ENCODE measurements at regions of chr1 and their contacts with region 1.

Region 1: DNA sequence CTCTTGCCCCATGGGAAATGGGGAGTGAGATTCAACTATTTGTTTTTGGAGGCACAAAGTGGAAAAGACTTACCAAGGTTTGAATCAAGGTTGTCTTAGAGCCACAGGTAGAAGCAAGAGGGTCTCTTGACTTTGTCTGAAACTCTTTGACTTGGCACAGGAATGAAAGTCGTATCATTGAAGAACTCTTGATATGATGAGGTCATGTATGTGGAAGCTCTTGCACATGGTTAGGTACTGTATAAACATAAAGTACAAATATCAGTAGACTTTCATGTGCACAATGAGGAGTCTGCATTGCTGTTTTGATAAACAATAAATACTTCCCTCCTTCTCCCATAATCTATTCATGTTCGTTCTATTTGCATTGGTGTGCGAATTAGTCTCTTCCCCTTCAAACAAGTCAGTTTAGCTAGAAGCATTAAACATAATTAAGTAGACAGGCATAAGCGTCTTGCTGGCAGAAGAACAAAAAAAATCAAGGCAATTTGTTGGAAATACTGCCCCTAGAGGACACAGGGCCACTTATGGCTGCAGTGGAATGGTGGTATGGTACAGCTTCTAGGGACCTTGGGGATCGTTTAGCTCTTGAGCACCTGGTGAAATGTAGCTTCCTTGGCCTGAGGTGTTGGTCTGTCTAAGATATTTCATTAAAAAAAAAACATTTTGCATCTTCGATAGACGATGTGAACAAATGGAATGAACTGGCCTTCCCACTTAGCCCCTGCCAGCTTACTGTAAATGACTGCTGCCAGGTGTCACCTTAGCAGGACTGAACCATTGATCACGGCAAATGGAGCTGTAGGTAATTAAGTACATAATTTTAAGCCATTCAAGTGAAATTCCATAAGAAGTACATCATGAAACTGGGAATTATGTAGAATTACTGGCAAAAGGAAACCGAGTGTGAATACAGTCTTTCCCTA is 218.0 kb upstream of the GALNT2 start:
- DNase-seq: peak in 1 of 2 experiments; percentile 43
- H3K4me3 ChIP-seq: no peak overlapping the region
- H3K4me3 Mint-ChIP-seq: no peak overlapping the region
- H3K27ac Mint-ChIP-seq: no peak overlapping the region
- H3K4me1 ChIP-seq: no peaks in the 10 kb centered on the region; the same call in 1 of the 2 replicates
- H3K4me1 Mint-ChIP-seq: peaks cover 9% of the 10 kb centered on the region
- H3K27me3 ChIP-seq: no peaks in the 10 kb centered on the region
- H3K27me3 Mint-ChIP-seq: peaks cover 2% of the 10 kb centered on the region
- CTCF ChIP-seq: peak; percentile 32 to 54

Region 2: DNA sequence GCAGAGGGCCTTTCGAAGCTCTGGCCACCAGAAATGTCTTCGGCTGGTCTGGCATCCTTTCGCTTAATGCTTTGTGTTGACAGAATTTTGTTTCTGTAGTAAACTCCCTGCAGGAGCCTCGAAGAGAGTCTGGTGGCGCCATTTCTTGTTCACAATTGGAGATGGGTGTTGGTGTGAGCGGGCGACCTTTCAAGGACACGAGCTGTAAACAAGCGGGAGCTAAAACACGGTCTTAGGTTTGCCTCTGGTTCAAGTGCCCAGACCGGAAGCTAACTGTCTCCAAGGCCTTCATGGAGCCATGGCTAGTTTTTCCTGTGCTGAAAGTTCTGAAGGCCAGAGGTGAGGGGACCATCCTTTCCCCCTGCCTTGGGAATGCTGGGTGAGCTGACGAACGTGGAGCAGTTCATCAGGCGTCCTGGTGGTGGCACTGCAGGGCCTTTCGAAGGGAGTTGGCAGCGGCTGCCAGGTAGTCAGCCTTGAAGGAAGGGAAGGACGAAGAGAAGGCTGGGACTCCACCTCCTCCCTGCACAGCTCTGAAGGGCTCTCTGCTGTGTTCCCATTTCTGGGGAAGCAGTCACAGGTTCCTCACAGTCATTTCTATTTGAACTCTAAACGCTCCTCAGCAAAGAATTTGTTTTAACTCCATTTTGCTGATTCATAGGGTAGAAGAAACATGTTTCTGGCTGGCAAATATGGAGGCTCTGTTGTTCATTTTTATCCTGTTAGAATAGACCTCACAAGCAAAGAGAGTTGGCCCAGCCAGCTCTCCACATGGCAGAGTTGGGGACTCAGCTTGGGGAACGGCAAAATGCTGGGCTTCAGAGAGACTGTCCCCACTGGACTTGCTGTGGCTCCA is 187.8 kb before region 1 on chr1:
- CTCF ChIA-PET with region 1: interaction called, 9 read pairs
- POLR2A ChIA-PET with region 1: no interaction called
- intact Hi-C with region 1: loop called (anchors 5 kb)
- DNase-seq: peak; percentile 65 to 79
- H3K4me3 ChIP-seq: no peak overlapping the region
- H3K4me3 Mint-ChIP-seq: no peak overlapping the region
- H3K27ac Mint-ChIP-seq: no peak overlapping the region
- H3K4me1 ChIP-seq: no peaks in the 10 kb centered on the region
- H3K4me1 Mint-ChIP-seq: no peaks in the 10 kb centered on the region
- H3K27me3 ChIP-seq: no peaks in the 10 kb centered on the region
- H3K27me3 Mint-ChIP-seq: no peaks in the 10 kb centered on the region
- CTCF ChIP-seq: peak; percentile 80 to 89

Measured in Caco-2 (cell line).